ENCODE measurements at regions of chr11 and their contacts with region 1.

Region 1: GRCh38 chr11:93494357-93494756 is 48.8 kb downstream of the SMCO4 start:
- DNase-seq: no peak
- H3K4me3 ChIP-seq: no peak overlapping the region
- H3K4me3 Mint-ChIP-seq: no peak overlapping the region
- H3K27ac Mint-ChIP-seq: no peak overlapping the region
- H3K4me1 ChIP-seq: peaks cover 29% of the 10 kb centered on the region
- H3K4me1 Mint-ChIP-seq: peaks cover 47% of the 10 kb centered on the region
- H3K27me3 ChIP-seq: no peaks in the 10 kb centered on the region
- H3K27me3 Mint-ChIP-seq: no peaks in the 10 kb centered on the region
- CTCF ChIP-seq: no peak

Region 2: GRCh38 chr11:93614173-93614722 is 119.9 kb after region 1 on chr11:
- CTCF ChIA-PET with region 1: no interaction called
- POLR2A ChIA-PET with region 1: no interaction called
- intact Hi-C with region 1: loop called (anchors 5 kb)
- DNase-seq: peak in 1 of 2 experiments; percentile 38
- H3K4me3 ChIP-seq: no peak overlapping the region
- H3K4me3 Mint-ChIP-seq: no peak overlapping the region
- H3K27ac Mint-ChIP-seq: no peak overlapping the region
- H3K4me1 ChIP-seq: peaks cover 32% of the 10 kb centered on the region
- H3K4me1 Mint-ChIP-seq: peaks cover 15% of the 10 kb centered on the region
- H3K27me3 ChIP-seq: no peaks in the 10 kb centered on the region
- H3K27me3 Mint-ChIP-seq: no peaks in the 10 kb centered on the region
- CTCF ChIP-seq: peak; percentile 30 to 32

Region 3: GRCh38 chr11:93801366-93801765 is 307.0 kb after region 1 on chr11:
- CTCF ChIA-PET with region 1: no interaction called
- POLR2A ChIA-PET with region 1: no interaction called
- intact Hi-C with region 1: no loop called
- DNase-seq: no peak
- H3K4me3 ChIP-seq: no peak overlapping the region
- H3K4me3 Mint-ChIP-seq: no peak overlapping the region
- H3K27ac Mint-ChIP-seq: no peak overlapping the region
- H3K4me1 ChIP-seq: 0 out of 2 replicates have a peak, but pooled peaks cover 4% of the 10 kb centered on the region
- H3K4me1 Mint-ChIP-seq: no peaks in the 10 kb centered on the region
- H3K27me3 ChIP-seq: no peaks in the 10 kb centered on the region
- H3K27me3 Mint-ChIP-seq: no peaks in the 10 kb centered on the region
- CTCF ChIP-seq: no peak